ENCODE measurements at regions of chr15 and their contacts with region 1.

Region 1: DNA sequence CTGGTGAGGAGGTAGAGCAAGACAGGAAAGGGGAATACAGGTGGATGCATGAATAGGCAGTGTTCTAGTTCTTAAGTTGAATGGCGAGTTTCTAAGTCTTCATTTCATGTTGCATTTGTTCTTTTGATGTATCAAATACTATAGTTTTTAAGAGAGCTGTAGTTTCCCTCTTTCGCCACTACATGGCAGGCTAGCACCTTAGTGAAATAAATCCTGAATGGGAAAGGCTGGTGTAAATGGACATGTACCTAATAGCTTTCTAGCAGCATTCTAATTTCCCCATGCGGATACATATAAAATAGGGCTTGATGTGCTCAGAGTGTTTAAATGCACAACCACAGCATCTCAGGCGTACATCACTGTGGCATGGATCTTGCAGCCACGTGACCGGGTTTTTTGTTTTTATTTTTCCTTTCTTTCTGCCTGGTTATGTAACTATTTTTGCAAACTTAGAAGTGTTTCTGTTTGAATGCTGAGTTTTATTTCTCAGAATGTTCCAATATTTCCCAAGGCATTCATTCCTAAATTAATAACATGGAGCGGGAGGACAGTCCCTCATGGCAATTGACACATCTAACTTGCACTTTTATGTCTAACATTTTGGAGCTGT is 23.5 kb upstream of the CLN6 start:
- DNase-seq: no peak
- ATAC-seq: peak; percentile 11; the same call in 1 of the 2 replicates
- H3K4me3 Mint-ChIP-seq: no peak overlapping the region
- H3K27ac Mint-ChIP-seq: no peak overlapping the region
- H3K4me1 Mint-ChIP-seq: peaks cover 13% of the 10 kb centered on the region
- H3K27me3 Mint-ChIP-seq: no peaks in the 10 kb centered on the region; the same call in 1 of the 2 replicates
- CTCF ChIP-seq: peak; percentile 61

Region 2: DNA sequence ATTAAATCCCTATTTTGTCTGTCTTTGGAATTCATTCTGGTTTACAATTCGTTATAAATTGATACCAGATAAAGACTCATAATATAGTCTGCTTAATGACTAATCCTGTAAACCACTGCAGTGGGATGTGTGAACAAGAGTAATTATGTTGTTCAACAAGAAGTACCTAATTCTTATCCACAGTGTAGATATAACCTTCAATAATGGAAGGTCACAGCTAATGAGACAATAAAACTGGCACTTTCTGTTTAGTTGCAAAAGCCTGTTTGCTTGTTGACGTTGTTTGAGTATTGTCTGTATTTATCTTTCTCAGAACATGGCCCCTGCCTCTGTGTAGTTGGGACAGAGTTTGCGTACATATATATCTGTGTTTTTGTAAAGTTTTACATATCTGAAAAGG is 172.2 kb before region 1 on chr15:
- CTCF ChIA-PET with region 1: no interaction called
- POLR2A ChIA-PET with region 1: no interaction called
- DNase-seq: no peak
- ATAC-seq: no peak
- H3K4me3 Mint-ChIP-seq: no peak overlapping the region
- H3K27ac Mint-ChIP-seq: no peak overlapping the region
- H3K4me1 Mint-ChIP-seq: peaks cover 58% of the 10 kb centered on the region
- H3K27me3 Mint-ChIP-seq: no peaks in the 10 kb centered on the region
- CTCF ChIP-seq: no peak

Region 3: DNA sequence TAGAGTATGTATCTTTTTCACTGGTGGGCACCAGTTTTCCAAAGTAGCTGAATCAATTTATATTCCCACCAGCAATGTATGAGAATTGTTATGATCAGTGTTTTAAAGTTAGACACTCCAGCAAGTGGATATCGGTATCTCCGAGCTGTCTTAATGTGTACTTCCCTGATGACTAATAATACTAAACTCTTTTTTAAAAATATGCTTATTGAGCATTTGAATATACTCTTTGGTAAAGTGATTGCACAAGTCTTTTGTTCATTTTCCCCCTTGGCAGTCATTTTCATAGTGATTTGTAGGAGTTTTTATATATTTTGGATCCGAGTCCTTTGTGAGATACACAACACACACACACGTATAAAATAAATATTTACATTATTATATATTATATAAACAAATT is 12.1 kb after region 1 on chr15:
- CTCF ChIA-PET with region 1: interaction called, 13 read pairs
- POLR2A ChIA-PET with region 1: no interaction called
- DNase-seq: no peak
- ATAC-seq: no peak
- H3K4me3 Mint-ChIP-seq: no peak overlapping the region
- H3K27ac Mint-ChIP-seq: no peak overlapping the region
- H3K4me1 Mint-ChIP-seq: peaks cover 30% of the 10 kb centered on the region
- H3K27me3 Mint-ChIP-seq: no peaks in the 10 kb centered on the region
- CTCF ChIP-seq: no peak

Region 4: DNA sequence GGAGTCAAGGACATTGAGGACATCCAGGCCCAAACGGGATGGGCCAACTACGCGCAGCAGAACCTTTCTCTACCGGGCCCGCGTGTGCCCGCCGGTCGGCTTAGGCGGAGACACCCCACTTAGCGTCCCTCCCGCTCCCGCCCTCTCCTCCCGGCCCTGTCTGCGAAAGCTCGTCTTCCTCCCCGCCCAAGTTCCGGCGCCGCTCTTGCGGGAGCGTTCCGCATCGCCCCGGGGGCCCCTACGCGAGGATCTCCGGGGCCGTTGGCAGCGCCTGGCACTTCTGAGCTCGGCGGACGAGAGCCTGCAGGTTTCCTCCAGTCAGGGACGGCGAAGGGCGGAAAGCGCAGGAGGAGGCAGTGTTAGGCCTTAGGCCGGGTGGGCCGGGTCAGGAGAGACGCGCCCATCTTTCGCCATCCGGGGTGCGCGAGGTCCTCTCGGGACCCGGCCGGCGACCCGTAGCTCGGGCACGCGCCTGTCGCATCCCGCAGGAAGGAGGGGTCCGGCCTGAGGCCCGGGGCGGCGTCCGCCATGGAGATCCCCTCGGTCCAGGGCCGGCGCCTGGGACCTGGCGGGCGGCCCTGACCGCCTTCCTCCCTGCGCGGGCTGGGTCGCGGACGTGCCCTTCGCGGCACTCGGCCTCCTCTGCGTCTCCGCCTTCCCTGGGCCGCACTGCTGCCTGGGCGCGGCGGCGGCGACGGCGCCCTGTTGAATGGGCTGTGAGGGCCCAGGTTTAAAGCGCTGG is 24.7 kb after region 1 on chr15 and contains the start of gene FEM1B:
- CTCF ChIA-PET with region 1: interaction called, 20 read pairs
- POLR2A ChIA-PET with region 1: interaction called, 22 read pairs
- DNase-seq: peak; percentile 84
- ATAC-seq: peak; percentile 81
- H3K4me3 Mint-ChIP-seq: peak within 1 kb of the TSS; percentile 98
- H3K27ac Mint-ChIP-seq: peak within 1 kb of the TSS; percentile 99
- H3K4me1 Mint-ChIP-seq: peaks cover 50% of the 10 kb centered on the region
- H3K27me3 Mint-ChIP-seq: no peaks in the 10 kb centered on the region
- CTCF ChIP-seq: no peak
- total RNA-seq, gene FEM1B: 59.7 to 64.8 TPM (median 62.4 TPM) in 3 replicates

Region 5: DNA sequence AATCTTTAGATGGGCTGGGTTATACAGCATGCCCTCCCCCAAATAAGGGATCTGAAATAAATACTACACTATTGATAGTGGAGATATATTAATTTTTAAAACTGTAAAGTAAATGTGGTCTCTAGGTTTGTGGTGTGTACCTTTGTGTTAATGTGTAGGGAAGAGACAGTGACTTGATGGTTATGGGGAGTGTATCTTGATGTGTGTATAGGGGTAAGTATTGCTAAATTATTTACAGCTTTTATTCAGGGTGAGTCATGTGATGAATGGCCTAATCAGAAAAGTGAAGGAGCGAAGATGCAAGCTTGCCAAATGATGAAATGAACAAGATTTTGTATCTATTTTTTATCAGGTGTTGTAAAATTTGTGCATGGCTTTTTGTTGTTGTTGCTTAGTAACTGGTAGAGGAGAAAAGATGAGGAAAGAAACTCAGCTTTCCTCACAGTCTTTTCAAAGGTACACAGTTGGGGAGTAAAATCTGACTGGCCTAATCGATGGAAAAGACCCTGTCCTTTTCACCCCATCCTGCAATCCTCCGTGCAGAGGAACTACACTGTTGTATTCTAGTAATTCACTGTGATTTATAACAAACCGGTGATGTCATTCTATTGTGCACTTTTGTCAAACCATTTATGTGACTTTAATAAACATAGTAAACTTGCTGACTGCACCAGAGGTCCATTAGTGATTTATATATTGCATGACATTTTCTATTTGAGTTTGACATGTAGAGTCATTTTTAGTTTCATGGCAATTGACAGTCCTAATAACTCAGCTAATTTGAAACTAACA is 42.2 kb after region 1 on chr15:
- CTCF ChIA-PET with region 1: interaction called, 12 read pairs
- POLR2A ChIA-PET with region 1: no interaction called
- DNase-seq: no peak
- ATAC-seq: no peak
- H3K4me3 Mint-ChIP-seq: no peak overlapping the region
- H3K27ac Mint-ChIP-seq: no peak overlapping the region
- H3K4me1 Mint-ChIP-seq: peaks cover 26% of the 10 kb centered on the region
- H3K27me3 Mint-ChIP-seq: no peaks in the 10 kb centered on the region
- CTCF ChIP-seq: no peak

Region 6: DNA sequence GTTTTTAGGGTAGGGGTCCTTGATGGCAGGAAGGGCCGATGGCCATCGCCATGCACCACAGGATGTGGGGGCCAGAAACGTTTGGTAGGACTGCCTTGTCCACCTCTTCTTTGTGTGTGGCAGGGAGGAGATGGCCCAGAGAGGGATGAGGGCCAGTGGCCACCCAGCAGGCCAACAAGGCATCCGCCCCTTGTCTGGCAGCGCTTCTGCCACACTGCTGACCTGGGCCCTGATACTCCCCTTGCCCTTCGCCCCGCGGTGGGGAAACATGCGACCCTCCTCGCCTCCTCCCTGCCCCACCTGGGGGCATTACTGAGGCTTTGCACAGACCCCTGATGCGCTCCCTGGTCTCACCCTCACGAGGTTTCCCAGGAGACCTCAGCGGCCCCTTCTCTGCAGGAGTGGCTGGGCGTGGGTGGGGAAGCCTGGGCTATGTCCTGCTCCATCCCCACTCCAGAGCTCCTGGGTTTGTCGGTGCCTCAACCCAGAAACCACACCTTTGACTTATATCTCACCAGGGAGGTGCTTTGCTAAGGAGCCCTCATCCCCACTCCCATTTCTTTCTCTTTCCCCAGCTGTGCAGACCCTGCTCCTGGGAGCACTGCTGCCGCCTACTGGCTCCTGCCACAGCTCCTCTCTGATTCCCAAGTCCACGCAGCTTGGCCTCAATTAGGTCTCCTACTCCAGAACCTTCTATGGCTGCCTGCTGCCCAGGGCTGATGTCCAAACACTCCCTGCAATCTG is 63.2 kb after region 1 on chr15:
- CTCF ChIA-PET with region 1: interaction called, 27 read pairs
- POLR2A ChIA-PET with region 1: no interaction called
- DNase-seq: peak; percentile 67
- ATAC-seq: peak; percentile 82
- H3K4me3 Mint-ChIP-seq: 0 out of 2 replicates have a peak overlapping the region, but pooled peaks have one; percentile 24
- H3K27ac Mint-ChIP-seq: no peak overlapping the region
- H3K4me1 Mint-ChIP-seq: peaks cover 23% of the 10 kb centered on the region
- H3K27me3 Mint-ChIP-seq: no peaks in the 10 kb centered on the region
- CTCF ChIP-seq: no peak

Region 7: GRCh38 chr15:68719672-68720071 is 466.6 kb after region 1 on chr15:
- CTCF ChIA-PET with region 1: no interaction called
- POLR2A ChIA-PET with region 1: no interaction called
- DNase-seq: no peak
- ATAC-seq: no peak
- H3K4me3 Mint-ChIP-seq: no peak overlapping the region
- H3K27ac Mint-ChIP-seq: no peak overlapping the region
- H3K4me1 Mint-ChIP-seq: no peaks in the 10 kb centered on the region
- H3K27me3 Mint-ChIP-seq: no peaks in the 10 kb centered on the region
- CTCF ChIP-seq: no peak

Measured in WTC11 (cell line).